HEK293T (cell line): ENCODE measurements at regions of chr1 and their contacts with region 1.

Region 1: DNA sequence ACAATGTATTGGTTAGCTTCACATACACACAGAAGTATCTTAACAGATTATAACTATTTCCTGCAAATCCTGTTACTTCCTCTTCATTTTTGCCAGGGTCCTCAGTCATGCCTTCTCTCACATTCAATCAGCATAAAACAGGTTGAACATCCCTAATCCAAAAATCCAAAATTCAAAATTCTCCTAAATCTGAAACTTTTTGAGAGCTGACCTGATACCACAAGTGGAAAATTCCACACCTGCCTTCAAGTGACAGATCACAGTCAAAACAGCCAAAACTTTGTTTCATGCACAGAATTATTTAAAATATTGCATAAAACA is 62.9 kb upstream of the FBXO28 start:
- DNase-seq: no peak

Region 2: GRCh38 chr1:224064150-224064549 is 13.1 kb after region 1 on chr1:
- CTCF ChIA-PET with region 1: interaction called, 15 read pairs
- POLR2A ChIA-PET with region 1: no interaction called
- DNase-seq: no peak

Region 3: GRCh38 chr1:224106568-224107281 is 55.7 kb after region 1 on chr1:
- CTCF ChIA-PET with region 1: no interaction called
- POLR2A ChIA-PET with region 1: no interaction called
- DNase-seq: peak; percentile 74